ENCODE measurements at regions of chr9 and their contacts with region 1.

Region 1: DNA sequence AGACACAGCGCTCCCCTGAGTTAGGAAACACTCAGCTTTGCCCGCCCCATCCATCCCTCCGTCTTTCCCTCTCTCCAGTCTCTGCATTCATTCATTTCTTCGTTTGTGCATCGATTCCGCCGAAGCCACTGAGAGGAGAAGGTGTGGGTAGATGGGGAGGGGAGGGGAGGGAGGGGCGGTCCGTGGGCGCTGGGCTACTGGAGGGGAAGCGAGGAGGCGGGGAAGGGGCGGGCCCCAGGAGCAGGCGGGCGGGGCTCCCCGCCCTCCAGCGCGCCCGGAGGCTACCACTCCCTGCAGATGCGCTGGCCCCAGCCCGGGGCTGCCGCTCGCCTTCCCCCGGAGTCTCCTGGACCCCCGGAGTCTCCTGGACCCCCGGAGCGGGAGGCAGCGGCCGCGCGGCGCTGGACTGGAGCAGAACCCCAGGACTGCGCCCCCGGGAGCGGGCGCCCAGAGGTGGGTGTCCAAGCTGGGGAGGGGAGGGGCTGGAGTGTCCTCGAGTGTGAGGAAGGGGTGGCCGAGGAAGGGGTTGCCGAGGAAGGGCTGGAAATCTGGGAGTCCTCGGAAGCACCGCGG is 159.5 kb downstream of the C9orf152 start:
- DNase-seq: peak; percentile 85
- H3K4me3 Mint-ChIP-seq: peak overlapping the region; percentile 94
- H3K27ac Mint-ChIP-seq: peak overlapping the region; percentile 94
- H3K4me1 Mint-ChIP-seq: peaks cover 42% of the 10 kb centered on the region
- H3K27me3 Mint-ChIP-seq: no peaks in the 10 kb centered on the region

Region 2: GRCh38 chr9:109894921-109895758 is 153.3 kb before region 1 on chr9:
- intact Hi-C with region 1: loop called (anchors 2 kb)
- DNase-seq: no peak
- H3K4me3 Mint-ChIP-seq: peak overlapping the region; percentile 50
- H3K27ac Mint-ChIP-seq: peak overlapping the region; percentile 91
- H3K4me1 Mint-ChIP-seq: peaks cover 45% of the 10 kb centered on the region
- H3K27me3 Mint-ChIP-seq: no peaks in the 10 kb centered on the region

Region 3: GRCh38 chr9:109903515-109904138 is 144.9 kb before region 1 on chr9:
- intact Hi-C with region 1: loop called (anchors 2 kb)
- DNase-seq: peak; percentile 59
- H3K4me3 Mint-ChIP-seq: no peak overlapping the region
- H3K27ac Mint-ChIP-seq: no peak overlapping the region
- H3K4me1 Mint-ChIP-seq: peaks cover 29% of the 10 kb centered on the region
- H3K27me3 Mint-ChIP-seq: no peaks in the 10 kb centered on the region

Region 4: GRCh38 chr9:109934857-109935215 is 113.7 kb before region 1 on chr9:
- intact Hi-C with region 1: loop called (anchors 1 kb)
- DNase-seq: no peak
- H3K4me3 Mint-ChIP-seq: no peak overlapping the region
- H3K27ac Mint-ChIP-seq: peak overlapping the region; percentile 84
- H3K4me1 Mint-ChIP-seq: peaks cover 50% of the 10 kb centered on the region
- H3K27me3 Mint-ChIP-seq: no peaks in the 10 kb centered on the region

Region 5: DNA sequence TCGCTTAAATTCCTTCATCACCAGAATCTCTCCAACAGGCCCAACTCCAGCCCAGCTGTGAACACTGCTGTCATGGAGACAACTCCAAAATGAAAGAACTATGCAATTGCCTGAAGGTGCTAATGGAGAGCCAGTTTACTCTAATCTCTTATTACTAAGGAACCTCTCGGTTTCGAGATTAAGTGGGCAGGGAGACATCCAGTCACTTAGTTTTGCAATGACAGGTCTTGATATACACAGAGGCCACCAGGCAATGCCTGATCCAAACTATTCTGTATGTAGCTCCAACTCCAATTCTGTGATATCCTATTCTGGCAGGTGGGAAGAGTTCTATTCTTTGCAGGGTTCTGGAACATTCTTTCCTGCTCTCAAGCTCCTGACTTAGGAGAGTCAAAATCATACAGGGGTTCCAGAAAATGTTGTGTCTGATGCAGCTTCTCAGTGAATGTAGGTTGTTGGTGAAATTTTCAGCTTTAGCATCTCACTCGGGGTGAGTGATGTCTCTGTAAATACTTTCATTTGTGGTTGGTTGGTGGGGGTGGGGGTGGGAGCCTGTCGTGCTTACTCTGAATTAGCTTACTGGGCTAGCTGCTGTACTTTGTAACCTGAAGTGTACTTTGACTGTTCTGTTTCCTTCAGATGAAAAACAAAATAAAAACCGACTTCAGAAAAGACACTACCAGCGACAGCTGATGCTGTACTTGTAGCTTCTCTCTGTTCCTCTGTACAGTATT is 97.6 kb before region 1 on chr9:
- intact Hi-C with region 1: loop called (anchors 1 kb)
- DNase-seq: no peak
- H3K4me3 Mint-ChIP-seq: peak overlapping the region; percentile 57
- H3K27ac Mint-ChIP-seq: peak overlapping the region; percentile 93
- H3K4me1 Mint-ChIP-seq: peaks cover 43% of the 10 kb centered on the region
- H3K27me3 Mint-ChIP-seq: no peaks in the 10 kb centered on the region

Region 6: GRCh38 chr9:110076894-110077725 is 28.6 kb after region 1 on chr9:
- intact Hi-C with region 1: no loop called
- DNase-seq: no peak
- H3K4me3 Mint-ChIP-seq: no peak overlapping the region
- H3K27ac Mint-ChIP-seq: peak overlapping the region; percentile 38
- H3K4me1 Mint-ChIP-seq: peaks cover 55% of the 10 kb centered on the region
- H3K27me3 Mint-ChIP-seq: no peaks in the 10 kb centered on the region

Region 7: GRCh38 chr9:110143950-110144545 is 95.6 kb after region 1 on chr9:
- intact Hi-C with region 1: loop called (anchors 1 kb)
- DNase-seq: peak; percentile 34
- H3K4me3 Mint-ChIP-seq: peak overlapping the region; percentile 51
- H3K27ac Mint-ChIP-seq: peak overlapping the region; percentile 95
- H3K4me1 Mint-ChIP-seq: peaks cover 79% of the 10 kb centered on the region
- H3K27me3 Mint-ChIP-seq: no peaks in the 10 kb centered on the region

Region 8: GRCh38 chr9:110152704-110153374 is 104.3 kb after region 1 on chr9:
- intact Hi-C with region 1: loop called (anchors 1 kb)
- DNase-seq: no peak
- H3K4me3 Mint-ChIP-seq: peak overlapping the region; percentile 37
- H3K27ac Mint-ChIP-seq: peak overlapping the region; percentile 77
- H3K4me1 Mint-ChIP-seq: peaks cover 95% of the 10 kb centered on the region
- H3K27me3 Mint-ChIP-seq: no peaks in the 10 kb centered on the region

Measured in activated T-helper 2 cell treated with anti-CD3 and anti-CD28 coated beads, Interferon-gamma antibody, Interleukin-2, Interleukin-4, amounts not matched to agents 10 μg/mL and 5 μg/mL and 100 μg/mL, durations not matched to agents 14 hours and 24 hours and 36 hours (primary cell).